Head of caudate nucleus (tissue), 42 donors: ENCODE measurements at regions of chr2 and their contacts with region 1.

Region 1: GRCh38 chr2:69386789-69387734 is at the start of gene GFPT1:
- DNase-seq: peak; percentile 82 to 97 (median 93)

Region 2: DNA sequence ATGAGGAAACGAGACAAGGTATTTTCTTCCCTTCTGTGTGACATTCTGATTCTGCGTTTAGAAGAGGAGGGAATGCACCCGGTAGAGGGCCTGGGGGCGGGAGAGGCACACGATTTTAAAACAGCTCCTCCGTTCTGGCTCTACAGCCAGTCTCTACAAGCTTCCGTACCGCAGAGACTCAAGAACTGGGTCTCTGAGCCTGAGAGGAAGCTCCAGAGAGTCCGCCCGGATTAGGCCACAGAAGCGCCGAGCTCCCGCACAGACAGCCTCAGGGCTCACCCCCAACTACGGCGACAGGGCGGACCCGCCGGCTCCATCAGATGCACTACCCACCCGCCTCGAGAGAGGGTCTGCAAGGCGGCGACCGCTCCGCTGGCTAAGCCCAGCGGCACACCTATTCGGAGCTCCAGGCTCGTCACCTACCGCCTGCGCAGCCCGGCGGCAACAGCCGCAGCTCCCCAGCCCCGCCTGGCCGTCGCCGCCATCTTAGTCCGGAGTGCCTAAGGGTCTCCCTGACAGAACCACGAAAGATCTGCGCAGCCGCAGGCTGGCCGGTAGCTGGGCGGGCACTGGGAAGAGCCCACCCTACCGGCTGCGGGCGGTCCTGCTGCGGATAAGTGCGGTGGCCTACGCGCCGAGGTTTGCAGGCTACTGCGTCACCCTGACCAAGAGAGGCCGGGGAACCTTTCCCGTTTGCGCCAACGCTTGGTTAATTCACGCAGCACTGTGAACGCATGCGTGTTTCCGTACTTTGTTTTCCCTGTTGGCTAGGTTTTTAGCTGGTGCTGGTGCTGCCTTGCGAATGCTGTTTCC is 50.1 kb after region 1 on chr2 and contains the start of gene NFU1:
- intact Hi-C with region 1: loop called (anchors 5 kb)
- DNase-seq: peak; percentile 84 to 97 (median 94)

Region 3: GRCh38 chr2:69643602-69644505 is 256.8 kb after region 1 on chr2 and contains the start of gene AAK1:
- intact Hi-C with region 1: loop called (anchors 5 kb)
- DNase-seq: peak; percentile 64 to 96 (median 91)